ENCODE measurements at regions of chr1 and their contacts with region 1.

Region 1: DNA sequence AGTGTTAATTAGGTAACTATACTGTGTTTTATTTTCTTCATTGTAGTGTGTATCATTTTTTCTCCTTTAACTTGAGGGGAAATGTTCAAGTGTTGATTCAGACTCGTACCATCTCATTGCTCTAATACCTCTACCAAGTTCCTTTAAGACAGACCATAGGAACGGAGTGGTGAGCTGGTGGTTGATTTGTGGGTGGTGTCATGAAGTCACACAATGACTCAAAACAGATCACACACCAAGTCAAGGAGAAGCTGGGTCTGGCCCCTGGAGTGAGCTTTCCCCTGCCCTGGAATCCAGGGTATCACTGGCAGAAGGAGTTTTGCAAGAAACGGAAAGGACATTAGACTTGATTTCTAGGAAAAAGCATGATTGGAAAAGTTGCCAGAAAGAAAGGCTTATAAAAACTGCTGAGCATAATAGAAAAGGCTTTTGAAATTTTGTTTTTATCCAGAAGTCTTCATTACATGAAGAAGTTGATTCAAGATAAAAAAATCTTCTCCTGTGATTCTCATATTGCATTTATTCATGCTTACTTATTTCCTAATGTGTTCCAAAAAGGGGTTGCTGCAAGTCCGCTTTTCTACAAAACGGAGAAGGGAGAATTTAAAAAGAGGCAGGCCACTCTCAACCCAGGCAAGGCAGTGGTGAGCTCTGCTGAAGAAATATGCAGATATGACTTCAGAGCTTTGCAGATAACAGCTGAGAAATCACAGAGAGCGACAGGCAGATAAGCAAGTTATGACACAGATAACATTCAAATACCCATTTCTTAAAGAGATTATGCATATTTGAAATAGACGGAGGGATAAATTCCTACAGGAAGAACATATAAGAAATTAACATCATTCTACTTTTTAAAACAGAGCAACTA is 79.7 kb downstream of the TBX19 start:
- DNase-seq: peak; percentile 36
- H3K4me3 Mint-ChIP-seq: peak overlapping the region; percentile 12
- H3K27ac Mint-ChIP-seq: peak overlapping the region; percentile 68
- H3K4me1 Mint-ChIP-seq: peaks cover 43% of the 10 kb centered on the region
- H3K27me3 Mint-ChIP-seq: peaks cover 3% of the 10 kb centered on the region

Region 2: GRCh38 chr1:167862432-167863076 is 497.8 kb before region 1 on chr1:
- intact Hi-C with region 1: no loop called
- DNase-seq: no peak
- H3K4me3 Mint-ChIP-seq: no peak overlapping the region
- H3K27ac Mint-ChIP-seq: no peak overlapping the region
- H3K4me1 Mint-ChIP-seq: peaks cover 4% of the 10 kb centered on the region
- H3K27me3 Mint-ChIP-seq: no peaks in the 10 kb centered on the region

Region 3: GRCh38 chr1:168348146-168348709 is 12.2 kb before region 1 on chr1:
- intact Hi-C with region 1: loop called (anchors 1 kb)
- DNase-seq: no peak
- H3K4me3 Mint-ChIP-seq: peak overlapping the region; percentile 82
- H3K27ac Mint-ChIP-seq: peak overlapping the region; percentile 69
- H3K4me1 Mint-ChIP-seq: peaks cover 23% of the 10 kb centered on the region
- H3K27me3 Mint-ChIP-seq: no peaks in the 10 kb centered on the region

Region 4: GRCh38 chr1:168386949-168387586 is 26.7 kb after region 1 on chr1:
- intact Hi-C with region 1: loop called (anchors 2 kb)
- DNase-seq: peak; percentile 52
- H3K4me3 Mint-ChIP-seq: peak overlapping the region; percentile 51
- H3K27ac Mint-ChIP-seq: peak overlapping the region; percentile 67
- H3K4me1 Mint-ChIP-seq: peaks cover 21% of the 10 kb centered on the region
- H3K27me3 Mint-ChIP-seq: peaks cover 25% of the 10 kb centered on the region

Region 5: GRCh38 chr1:168509875-168510791 is 149.7 kb after region 1 on chr1:
- intact Hi-C with region 1: loop called (anchors 5 kb)
- DNase-seq: peak; percentile 27
- H3K4me3 Mint-ChIP-seq: no peak overlapping the region
- H3K27ac Mint-ChIP-seq: peak overlapping the region; percentile 77
- H3K4me1 Mint-ChIP-seq: peaks cover 82% of the 10 kb centered on the region
- H3K27me3 Mint-ChIP-seq: peaks cover 1% of the 10 kb centered on the region

Region 6: GRCh38 chr1:168572633-168573032 is 212.2 kb after region 1 on chr1:
- intact Hi-C with region 1: loop called (anchors 5 kb)
- DNase-seq: no peak
- H3K4me3 Mint-ChIP-seq: no peak overlapping the region
- H3K27ac Mint-ChIP-seq: no peak overlapping the region
- H3K4me1 Mint-ChIP-seq: peaks cover 39% of the 10 kb centered on the region
- H3K27me3 Mint-ChIP-seq: peaks cover 9% of the 10 kb centered on the region

Measured in activated T-helper 1 cell treated with anti-CD3 and anti-CD28 coated beads, Interleukin-12 subunit alpha, Interleukin-12 subunit beta, Interleukin-2, Interleukin-4 antibody, amounts not matched to agents 30 ng/mL and 10 ng/mL and 1 ng/mL, durations not matched to agents 14 hours and 24 hours and 36 hours (primary cell).